HCT116 (cell line): ENCODE measurements at regions of chr7 and their contacts with region 1.

Region 1: GRCh38 chr7:6323967-6324701 is 51.7 kb upstream of the CYTH3 start:
- DNase-seq: no peak
- ATAC-seq: no peak
- H3K4me3 ChIP-seq: no peak overlapping the region
- H3K27ac ChIP-seq: no peak overlapping the region
- H3K4me1 ChIP-seq: no peaks in the 10 kb centered on the region
- H3K27me3 ChIP-seq: no peaks in the 10 kb centered on the region
- CTCF ChIP-seq: no peak
- POLR2A ChIP-seq: no peak
- RAD21 ChIP-seq: no peak

Region 2: GRCh38 chr7:5854738-5855137 is 469.4 kb before region 1 on chr7:
- CTCF ChIA-PET with region 1: interaction called, 3 read pairs
- POLR2A ChIA-PET with region 1: no interaction called
- RAD21 ChIA-PET with region 1: no interaction called
- intact Hi-C with region 1: loop called (anchors 10 kb)
- DNase-seq: no peak
- ATAC-seq: no peak
- H3K4me3 ChIP-seq: no peak overlapping the region
- H3K27ac ChIP-seq: no peak overlapping the region
- H3K4me1 ChIP-seq: peaks cover 0 to 15% of the 10 kb centered on the region in 2 experiments; a peak in 3 of 4 replicates
- H3K27me3 ChIP-seq: no peaks in the 10 kb centered on the region
- CTCF ChIP-seq: no peak
- POLR2A ChIP-seq: no peak
- RAD21 ChIP-seq: no peak

Region 3: DNA sequence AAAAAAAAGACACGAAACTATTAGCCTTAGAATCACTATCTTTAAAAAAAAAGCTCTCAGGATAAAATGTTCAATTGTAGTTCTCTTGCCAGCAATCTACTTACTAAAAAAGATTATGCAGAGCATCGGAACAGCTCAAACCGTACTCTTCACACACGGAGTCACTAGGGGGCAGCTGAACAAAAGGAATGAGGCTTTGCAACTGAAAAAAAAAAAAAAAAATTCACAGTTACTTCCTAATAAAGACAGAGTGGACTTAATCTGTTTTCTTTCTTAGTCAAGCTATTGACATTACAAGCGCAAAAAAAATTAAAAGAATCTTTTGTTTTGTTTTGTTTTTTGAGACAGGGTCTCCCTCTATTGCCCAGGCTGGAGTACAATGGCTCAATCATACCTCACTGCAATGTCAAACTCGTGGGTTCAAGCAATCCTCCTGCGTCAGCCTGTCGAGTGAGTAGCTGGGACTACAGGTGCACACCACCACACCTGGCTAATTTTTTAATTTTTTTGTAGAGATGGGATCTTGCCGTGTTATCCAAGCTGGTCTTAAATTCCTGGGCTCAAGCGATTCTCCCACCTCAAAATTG is 326.8 kb before region 1 on chr7:
- CTCF ChIA-PET with region 1: interaction called, 9 read pairs
- POLR2A ChIA-PET with region 1: no interaction called
- RAD21 ChIA-PET with region 1: no interaction called
- intact Hi-C with region 1: loop called (anchors 1 kb)
- DNase-seq: no peak
- ATAC-seq: peak; percentile 82
- H3K4me3 ChIP-seq: no peak overlapping the region
- H3K27ac ChIP-seq: no peak overlapping the region
- H3K4me1 ChIP-seq: peaks cover 0 to 8% of the 10 kb centered on the region in 2 experiments; a peak in 1 of 4 replicates
- H3K27me3 ChIP-seq: no peaks in the 10 kb centered on the region
- CTCF ChIP-seq: peak; percentile 53 to 76 (median 67)
- POLR2A ChIP-seq: no peak
- RAD21 ChIP-seq: peak; percentile 89

Region 4: DNA sequence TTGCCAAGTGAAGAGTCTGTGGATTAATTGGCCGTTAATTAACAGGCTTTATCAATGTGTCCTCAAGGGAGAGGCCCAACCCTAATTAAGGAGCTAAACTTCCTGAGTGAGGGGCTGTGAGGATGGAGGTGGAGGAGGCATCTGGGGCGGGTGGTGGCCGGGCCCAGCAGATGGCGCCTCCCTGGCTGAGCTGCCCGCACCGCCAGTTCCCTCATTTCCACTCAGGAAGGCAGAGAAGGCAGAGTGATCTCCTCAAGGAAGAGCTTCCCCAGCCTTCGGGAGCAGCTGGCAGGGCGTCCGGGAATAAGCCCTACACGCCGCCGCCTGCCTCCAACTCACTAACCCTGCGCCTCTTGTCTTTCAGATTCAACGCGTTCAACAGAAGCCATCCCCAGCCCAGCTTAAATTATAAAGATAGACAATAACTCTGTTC is 163.9 kb before region 1 on chr7:
- CTCF ChIA-PET with region 1: interaction called, 16 read pairs
- POLR2A ChIA-PET with region 1: interaction called, 4 read pairs
- RAD21 ChIA-PET with region 1: no interaction called
- intact Hi-C with region 1: loop called (anchors 1 kb)
- DNase-seq: no peak
- ATAC-seq: peak; percentile 68
- H3K4me3 ChIP-seq: no peak overlapping the region
- H3K27ac ChIP-seq: no peak overlapping the region
- H3K4me1 ChIP-seq: no peaks in the 10 kb centered on the region
- H3K27me3 ChIP-seq: no peaks in the 10 kb centered on the region
- CTCF ChIP-seq: peak; percentile 39 to 65 (median 53); a peak in 5 of 6 replicates
- POLR2A ChIP-seq: no peak
- RAD21 ChIP-seq: peak; percentile 58

Region 5: DNA sequence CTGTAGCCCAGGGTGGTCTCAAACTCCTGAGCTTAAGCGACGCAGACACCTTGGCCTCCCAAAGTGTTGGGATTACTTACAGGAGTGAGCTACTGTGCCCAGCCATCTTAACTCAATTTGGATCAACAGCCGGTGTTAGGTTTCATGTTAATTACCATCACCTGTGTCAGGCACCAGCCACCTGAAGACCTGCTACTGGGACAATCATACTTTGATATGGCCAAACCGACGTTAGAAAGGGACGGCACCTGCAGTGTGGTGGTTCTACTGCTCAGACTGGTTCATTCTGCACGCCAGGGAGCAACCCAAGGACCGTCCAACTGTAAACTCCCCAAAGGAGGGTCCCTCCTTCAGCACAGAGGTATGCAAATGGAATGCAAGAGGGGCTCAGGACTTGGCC is 22.4 kb after region 1 on chr7:
- CTCF ChIA-PET with region 1: no interaction called
- POLR2A ChIA-PET with region 1: no interaction called
- RAD21 ChIA-PET with region 1: no interaction called
- intact Hi-C with region 1: no loop called
- DNase-seq: no peak
- ATAC-seq: no peak
- H3K4me3 ChIP-seq: no peak overlapping the region
- H3K27ac ChIP-seq: no peak overlapping the region
- H3K4me1 ChIP-seq: peaks cover 5 to 6% of the 10 kb centered on the region in 2 experiments; a peak in 2 of 4 replicates
- H3K27me3 ChIP-seq: no peaks in the 10 kb centered on the region
- CTCF ChIP-seq: no peak
- POLR2A ChIP-seq: no peak
- RAD21 ChIP-seq: no peak

Region 6: DNA sequence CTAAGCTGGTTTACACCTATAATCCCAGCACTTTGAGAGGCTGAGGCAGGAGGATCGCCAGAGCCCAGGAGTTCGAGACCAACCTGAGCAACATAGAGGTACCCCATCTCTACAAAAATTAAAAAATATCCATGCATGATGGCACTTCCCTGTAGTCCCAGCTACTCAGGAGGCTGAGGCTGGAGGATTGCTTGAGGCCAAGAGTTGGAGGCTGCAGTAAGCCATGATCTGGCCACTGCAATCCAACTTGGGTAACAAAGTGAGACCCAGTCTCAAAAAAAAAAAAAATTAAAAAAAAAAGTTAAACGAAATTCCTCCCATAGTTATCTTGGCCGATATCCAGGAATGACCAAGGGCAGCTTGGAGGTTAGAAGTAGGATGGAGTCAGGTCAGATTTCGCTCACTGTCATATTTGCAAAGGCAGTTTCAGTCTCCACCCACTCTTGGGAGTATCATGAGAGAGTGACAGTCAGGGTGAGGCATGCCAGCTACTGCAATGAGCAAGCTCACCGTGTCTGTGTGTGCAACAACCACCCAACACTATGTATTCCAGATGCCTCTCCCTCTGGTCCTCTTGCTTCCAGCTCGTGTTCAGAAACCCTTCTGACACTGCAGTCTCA is 247.1 kb after region 1 on chr7:
- CTCF ChIA-PET with region 1: no interaction called
- POLR2A ChIA-PET with region 1: no interaction called
- RAD21 ChIA-PET with region 1: no interaction called
- intact Hi-C with region 1: no loop called
- DNase-seq: no peak
- ATAC-seq: no peak
- H3K4me3 ChIP-seq: no peak overlapping the region
- H3K27ac ChIP-seq: no peak overlapping the region
- H3K4me1 ChIP-seq: peaks cover 5 to 6% of the 10 kb centered on the region in 2 experiments; a peak in 3 of 4 replicates
- H3K27me3 ChIP-seq: no peaks in the 10 kb centered on the region
- CTCF ChIP-seq: no peak
- POLR2A ChIP-seq: no peak
- RAD21 ChIP-seq: no peak